ENCODE measurements at regions of chr11 and their contacts with region 1.

Region 1: GRCh38 chr11:125091247-125091876 is 20.1 kb downstream of the TMEM218 start:
- DNase-seq: peak; percentile 28
- H3K4me3 ChIP-seq: no peak overlapping the region
- CTCF ChIP-seq: peak; percentile 57

Region 2: DNA sequence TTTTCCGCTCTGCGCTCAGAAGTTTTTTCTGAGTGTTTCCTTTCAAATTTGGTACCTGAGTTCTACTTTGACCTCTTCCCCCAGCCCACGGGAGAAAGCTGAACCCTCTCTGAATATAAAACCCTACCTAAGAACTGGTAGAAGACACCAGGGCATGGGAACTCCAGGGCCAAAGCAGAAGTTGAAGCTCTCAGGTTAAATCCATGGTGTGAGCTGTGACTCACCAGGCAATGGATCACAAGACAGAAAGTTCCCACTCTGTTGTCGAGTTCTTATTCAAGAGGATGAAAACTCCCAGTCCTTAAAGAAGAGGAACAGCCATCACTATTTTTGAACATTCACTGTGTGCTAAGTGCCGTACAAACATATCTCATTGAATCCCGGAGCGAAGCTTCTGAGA is 11.1 kb after region 1 on chr11:
- CTCF ChIA-PET with region 1: interaction called, 19 read pairs
- POLR2A ChIA-PET with region 1: interaction called, 3 read pairs
- DNase-seq: no peak
- H3K4me3 ChIP-seq: no peak overlapping the region
- CTCF ChIP-seq: no peak

Region 3: GRCh38 chr11:125117429-125117828 is 26.1 kb after region 1 on chr11:
- CTCF ChIA-PET with region 1: interaction called, 24 read pairs
- POLR2A ChIA-PET with region 1: no interaction called
- DNase-seq: no peak
- H3K4me3 ChIP-seq: no peak overlapping the region
- CTCF ChIP-seq: no peak

Region 4: GRCh38 chr11:125141686-125142535 is 50.5 kb after region 1 on chr11:
- CTCF ChIA-PET with region 1: interaction called, 160 read pairs
- POLR2A ChIA-PET with region 1: no interaction called
- DNase-seq: no peak
- H3K4me3 ChIP-seq: no peak overlapping the region
- CTCF ChIP-seq: peak; percentile 92

Region 5: DNA sequence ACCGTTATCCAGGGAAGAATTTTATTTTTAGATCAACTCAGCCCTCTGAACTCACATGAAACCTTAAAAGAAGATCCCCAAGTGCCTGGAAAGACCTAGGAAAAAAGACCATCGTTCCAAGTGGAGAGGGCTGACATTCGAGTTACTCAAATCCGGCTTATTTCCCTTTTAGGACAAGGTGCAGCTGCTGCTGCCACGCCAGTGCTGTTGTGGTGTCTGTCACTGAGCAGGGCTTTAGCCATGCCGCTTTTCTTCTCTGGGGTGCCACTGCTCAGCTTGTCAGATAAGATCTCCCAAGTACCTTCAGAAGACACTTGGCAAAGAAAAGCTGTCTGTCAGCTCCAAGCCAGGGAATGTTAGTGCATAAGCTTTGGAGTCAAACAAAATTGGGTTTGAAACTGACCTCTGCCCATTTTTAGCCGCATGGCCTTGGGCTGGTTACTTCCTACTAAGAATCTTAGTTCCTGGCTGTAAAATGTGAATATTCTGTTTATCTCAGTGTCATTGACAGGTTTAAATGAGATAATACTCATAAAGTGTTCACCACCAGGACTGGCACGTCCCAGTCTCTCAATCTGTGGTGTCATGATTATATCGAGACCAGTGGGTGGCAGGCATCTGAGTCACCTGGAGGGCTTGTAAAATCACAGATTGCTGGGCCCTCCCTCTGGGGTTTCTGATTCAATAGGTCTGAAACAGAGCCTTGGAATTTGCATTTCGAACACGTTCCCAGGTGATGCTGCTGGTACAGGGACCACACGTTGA is 190.7 kb after region 1 on chr11:
- CTCF ChIA-PET with region 1: no interaction called
- POLR2A ChIA-PET with region 1: no interaction called
- DNase-seq: no peak
- H3K4me3 ChIP-seq: no peak overlapping the region
- CTCF ChIP-seq: no peak

Region 6: GRCh38 chr11:125404776-125405435 is 313.5 kb after region 1 on chr11:
- CTCF ChIA-PET with region 1: interaction called, 42 read pairs
- POLR2A ChIA-PET with region 1: no interaction called
- DNase-seq: no peak
- H3K4me3 ChIP-seq: no peak overlapping the region
- CTCF ChIP-seq: peak; percentile 99